Calu3 (cell line): ENCODE measurements at regions of chr1 and their contacts with region 1.

Region 1: GRCh38 chr1:157992031-157992832 is 1.2 kb upstream of the KIRREL1 start:
- DNase-seq: peak; percentile 83
- H3K4me3 Mint-ChIP-seq: peak overlapping the region; percentile 93
- H3K27ac Mint-ChIP-seq: peak overlapping the region; percentile 29
- H3K4me1 Mint-ChIP-seq: peaks cover 36% of the 10 kb centered on the region
- H3K27me3 Mint-ChIP-seq: peaks cover 23% of the 10 kb centered on the region
- CTCF ChIP-seq: peak; percentile 92

Region 2: GRCh38 chr1:157652859-157653493 is 339.3 kb before region 1 on chr1:
- CTCF ChIA-PET with region 1: no interaction called
- intact Hi-C with region 1: no loop called
- DNase-seq: no peak
- H3K4me3 Mint-ChIP-seq: no peak overlapping the region
- H3K27ac Mint-ChIP-seq: no peak overlapping the region
- H3K4me1 Mint-ChIP-seq: no peaks in the 10 kb centered on the region
- H3K27me3 Mint-ChIP-seq: no peaks in the 10 kb centered on the region
- CTCF ChIP-seq: no peak

Region 3: GRCh38 chr1:157963713-157964112 is 28.5 kb before region 1 on chr1:
- CTCF ChIA-PET with region 1: interaction called, 31 read pairs
- intact Hi-C with region 1: loop called (anchors 1 kb)
- DNase-seq: peak; percentile 85
- H3K4me3 Mint-ChIP-seq: no peak overlapping the region
- H3K27ac Mint-ChIP-seq: peak overlapping the region; percentile 51
- H3K4me1 Mint-ChIP-seq: peaks cover 57% of the 10 kb centered on the region
- H3K27me3 Mint-ChIP-seq: no peaks in the 10 kb centered on the region
- CTCF ChIP-seq: peak; percentile 97

Region 4: GRCh38 chr1:158035976-158036583 is 43.8 kb after region 1 on chr1:
- CTCF ChIA-PET with region 1: interaction called, 27 read pairs
- intact Hi-C with region 1: loop called (anchors 1 kb)
- DNase-seq: peak; percentile 60
- H3K4me3 Mint-ChIP-seq: no peak overlapping the region
- H3K27ac Mint-ChIP-seq: no peak overlapping the region
- H3K4me1 Mint-ChIP-seq: peaks cover 13% of the 10 kb centered on the region
- H3K27me3 Mint-ChIP-seq: no peaks in the 10 kb centered on the region
- CTCF ChIP-seq: peak; percentile 77

Region 5: GRCh38 chr1:158087320-158087927 is 95.2 kb after region 1 on chr1:
- CTCF ChIA-PET with region 1: interaction called, 34 read pairs
- intact Hi-C with region 1: loop called (anchors 1 kb)
- DNase-seq: peak; percentile 79
- H3K4me3 Mint-ChIP-seq: no peak overlapping the region
- H3K27ac Mint-ChIP-seq: no peak overlapping the region
- H3K4me1 Mint-ChIP-seq: no peaks in the 10 kb centered on the region
- H3K27me3 Mint-ChIP-seq: no peaks in the 10 kb centered on the region
- CTCF ChIP-seq: peak; percentile 98

Region 6: DNA sequence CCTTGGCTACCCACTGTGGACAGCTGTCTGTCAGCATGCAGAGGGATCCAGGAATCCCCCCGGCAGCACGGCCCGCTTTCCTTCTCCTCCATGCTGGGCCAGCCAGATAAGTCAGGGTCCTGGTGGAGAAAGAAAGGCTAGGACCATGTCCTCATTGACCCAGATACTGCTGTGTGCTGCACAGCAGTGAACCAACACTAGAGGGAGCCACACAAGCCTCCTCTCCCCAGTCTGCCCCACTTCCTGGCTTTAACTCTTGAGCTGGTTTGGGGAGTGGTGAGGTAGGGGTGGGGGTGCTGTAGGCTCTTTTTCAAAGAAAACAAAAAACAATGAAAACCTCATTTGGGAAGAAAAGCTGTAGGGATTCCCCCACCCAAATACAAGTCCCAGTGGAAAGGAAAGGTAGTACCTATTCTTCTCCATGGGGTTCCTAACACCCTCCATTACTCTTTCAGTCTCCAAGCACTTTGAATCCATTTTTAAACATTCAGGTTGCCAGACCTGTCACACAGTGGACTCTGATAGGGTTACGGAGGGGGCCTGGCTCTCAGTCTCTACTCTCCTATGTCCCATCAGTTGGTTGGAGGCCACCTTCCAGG is 103.6 kb after region 1 on chr1:
- CTCF ChIA-PET with region 1: interaction called, 12 read pairs
- intact Hi-C with region 1: no loop called
- DNase-seq: peak; percentile 43
- H3K4me3 Mint-ChIP-seq: no peak overlapping the region
- H3K27ac Mint-ChIP-seq: no peak overlapping the region
- H3K4me1 Mint-ChIP-seq: no peaks in the 10 kb centered on the region
- H3K27me3 Mint-ChIP-seq: no peaks in the 10 kb centered on the region
- CTCF ChIP-seq: peak; percentile 70

Region 7: DNA sequence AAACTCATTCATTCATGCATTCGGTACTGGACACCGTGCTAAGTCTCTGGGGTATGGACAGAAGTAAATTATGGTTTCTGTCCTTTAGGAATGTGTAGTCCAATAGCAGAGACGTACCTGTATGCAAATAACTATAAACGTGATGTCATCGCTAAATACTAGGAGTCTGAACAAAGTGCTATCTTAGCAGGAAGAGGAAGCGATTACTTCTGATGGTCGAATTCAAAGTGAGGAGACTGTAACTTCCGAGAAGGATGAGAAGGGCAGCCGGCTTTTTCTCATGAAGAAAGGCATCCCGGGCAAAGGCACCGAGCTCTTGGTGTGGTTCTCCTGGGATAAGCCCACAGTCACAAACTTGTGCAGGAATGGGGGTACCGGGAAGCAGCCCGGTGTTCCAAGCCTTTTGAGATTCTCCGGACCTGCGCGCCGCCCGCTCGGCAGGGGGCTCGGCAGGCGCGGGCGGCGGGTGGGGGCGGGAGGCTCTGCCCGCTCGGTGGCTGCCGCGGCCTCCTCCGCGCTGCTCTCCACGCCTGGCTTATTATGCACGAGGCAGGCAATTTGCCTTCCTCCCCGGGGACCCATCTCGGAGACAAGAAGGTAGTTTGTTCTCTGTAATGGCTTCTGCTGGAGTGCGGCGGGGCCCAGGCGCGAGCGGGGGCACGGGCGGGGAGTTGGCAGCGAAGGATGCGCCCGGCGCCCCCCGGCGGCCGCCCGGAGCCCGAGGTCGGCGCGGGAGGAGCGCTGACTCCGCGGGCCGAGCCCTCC is 120.9 kb after region 1 on chr1:
- CTCF ChIA-PET with region 1: interaction called, 137 read pairs
- intact Hi-C with region 1: loop called (anchors 2 kb)
- DNase-seq: peak; percentile 75
- H3K4me3 Mint-ChIP-seq: peak overlapping the region; percentile 67
- H3K27ac Mint-ChIP-seq: no peak overlapping the region
- H3K4me1 Mint-ChIP-seq: peaks cover 10% of the 10 kb centered on the region
- H3K27me3 Mint-ChIP-seq: peaks cover 40% of the 10 kb centered on the region
- CTCF ChIP-seq: peak; percentile 69